ENCODE measurements at regions of chr2 and their contacts with region 1.

Region 1: DNA sequence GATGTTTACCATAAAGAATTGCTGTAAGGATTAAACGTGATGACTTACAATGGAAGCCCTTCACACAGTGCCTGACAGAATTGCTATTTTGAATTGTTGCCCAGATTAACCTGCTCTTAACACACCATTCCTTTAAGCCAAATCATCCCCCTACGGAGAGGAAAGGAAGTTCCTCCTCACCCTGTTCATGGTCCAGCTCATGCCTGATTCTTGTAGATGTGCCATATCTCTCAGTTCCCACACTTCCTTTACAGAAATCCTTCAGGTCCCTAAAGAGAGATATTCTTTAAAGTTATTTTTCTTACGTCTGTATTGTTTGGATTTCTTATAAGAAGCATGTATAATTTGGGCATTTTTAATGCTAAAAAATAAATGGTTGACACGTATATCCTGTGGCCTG is 127.5 kb upstream of the DAPL1 start:
- DNase-seq: no peak
- H3K4me3 ChIP-seq: no peak overlapping the region
- H3K27ac ChIP-seq: peak overlapping the region; percentile 10 to 54 (median 16)
- H3K4me1 ChIP-seq: peaks cover 34 to 52% (median 44%) of the 10 kb centered on the region in 4 donors
- H3K27me3 ChIP-seq: no peaks in the 10 kb centered on the region
- CTCF ChIP-seq: no peak
- EP300 ChIP-seq: no peak
- POLR2A ChIP-seq: no peak

Region 2: DNA sequence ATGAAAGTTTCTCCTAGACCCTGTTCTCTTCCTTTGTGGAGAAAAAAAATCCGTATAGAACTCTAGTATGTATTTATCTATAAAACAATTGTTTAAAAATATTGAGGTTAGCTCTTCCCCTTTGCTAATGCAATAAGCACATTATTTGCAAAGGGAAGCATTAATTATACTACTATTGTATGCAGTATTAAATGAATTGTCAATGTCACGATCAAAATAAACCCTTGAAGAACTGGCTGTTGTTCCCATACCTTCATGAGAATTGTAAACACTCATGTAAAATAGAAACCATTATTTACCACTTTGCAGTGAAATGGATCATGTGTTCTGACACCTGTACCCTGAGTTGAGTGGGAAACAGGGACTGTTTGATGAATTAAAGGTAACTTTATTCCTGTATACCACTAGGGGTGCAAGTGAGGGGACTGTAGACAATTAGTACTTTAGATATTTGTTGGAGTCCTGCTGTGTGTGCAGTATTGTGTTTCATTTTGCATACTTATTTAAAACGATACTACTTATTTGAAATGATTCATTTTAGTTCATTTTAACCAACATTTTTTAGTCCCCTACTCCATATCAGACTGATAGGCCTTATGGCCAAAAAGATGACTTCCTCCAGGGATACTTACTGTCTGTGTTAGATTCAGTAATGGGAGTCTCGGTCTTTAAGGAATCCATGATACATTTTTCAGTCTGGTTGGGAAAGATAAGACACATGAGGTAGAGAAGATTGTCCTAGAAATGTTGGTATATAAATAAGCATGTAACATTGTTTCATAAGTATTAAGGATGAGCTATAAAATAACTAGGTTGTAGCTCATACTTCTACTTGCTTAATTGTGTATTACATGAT is 202.9 kb before region 1 on chr2:
- intact Hi-C with region 1: loop called (anchors 10 kb)
- DNase-seq: no peak
- H3K4me3 ChIP-seq: no peak overlapping the region
- H3K27ac ChIP-seq: no peak overlapping the region
- H3K4me1 ChIP-seq: peaks cover 16 to 52% (median 43%) of the 10 kb centered on the region in 4 donors
- H3K27me3 ChIP-seq: no peaks in the 10 kb centered on the region
- CTCF ChIP-seq: peak in 1 of 3 experiments; percentile 45
- EP300 ChIP-seq: no peak
- POLR2A ChIP-seq: no peak

Region 3: GRCh38 chr2:158729873-158730620 is 62.5 kb after region 1 on chr2:
- intact Hi-C with region 1: no loop called
- DNase-seq: no peak
- H3K4me3 ChIP-seq: no peak overlapping the region
- H3K27ac ChIP-seq: no peak overlapping the region
- H3K4me1 ChIP-seq: peaks cover 0 to 4% (median 0%) of the 10 kb centered on the region in 4 donors
- H3K27me3 ChIP-seq: peaks cover 0 to 9% (median 0%) of the 10 kb centered on the region in 4 donors
- CTCF ChIP-seq: no peak
- EP300 ChIP-seq: no peak
- POLR2A ChIP-seq: no peak

Measured in esophagus muscularis mucosa (tissue), 4 donors.